CD8-positive, alpha-beta T cell (primary cell): ENCODE measurements at regions of chr6 and their contacts with region 1.

Region 1: DNA sequence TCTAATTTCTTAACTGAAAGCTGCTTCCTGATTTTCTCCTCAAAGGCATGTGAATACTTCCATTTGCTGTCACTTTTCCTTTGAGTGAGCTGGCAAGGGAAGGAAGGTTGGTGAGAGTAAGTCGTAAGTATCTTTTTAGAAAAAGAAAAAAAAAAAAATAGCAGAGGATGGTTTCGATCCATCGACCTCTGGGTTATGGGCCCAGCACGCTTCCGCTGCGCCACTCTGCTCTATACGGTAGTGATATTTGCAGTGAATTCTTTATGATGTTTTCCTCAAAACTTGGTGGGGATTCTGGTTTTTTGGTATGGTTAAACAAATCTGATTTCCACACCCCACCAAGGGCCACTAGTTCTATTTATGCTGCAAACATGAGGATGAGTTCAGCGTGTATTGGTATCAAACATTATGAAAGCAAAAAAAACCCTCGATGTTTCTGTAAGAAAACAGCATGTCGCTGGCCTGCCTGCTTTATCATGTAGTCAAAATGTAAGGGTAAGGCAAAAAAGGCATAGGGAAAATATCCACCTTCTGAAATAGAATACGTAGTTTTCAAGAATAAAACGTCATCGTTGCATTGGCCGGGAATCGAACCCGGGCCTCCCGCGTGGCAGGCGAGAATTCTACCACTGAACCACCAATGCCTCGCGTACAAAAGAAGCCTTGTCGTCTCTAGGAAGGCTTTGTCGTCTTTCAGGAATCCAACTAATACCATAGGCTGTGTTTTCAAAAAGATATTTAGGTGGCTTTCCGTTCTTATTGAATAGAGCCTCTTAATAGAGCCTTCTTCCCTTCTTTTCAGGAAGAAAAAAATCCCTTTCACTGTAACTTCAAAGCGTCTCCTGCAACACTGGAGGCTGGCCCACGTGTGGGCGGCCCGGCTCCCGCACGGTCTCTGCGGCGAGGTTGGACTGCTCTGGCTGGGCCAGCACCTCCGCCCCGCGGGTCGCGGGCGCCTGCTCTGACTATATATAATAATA is 9.6 kb downstream of the OR2B2 start:
- DNase-seq: peak; percentile 83 to 95 (median 91)
- ATAC-seq: peak; percentile 80
- H3K4me3 ChIP-seq: peak overlapping the region; percentile 61
- H3K4me3 Mint-ChIP-seq: peak overlapping the region; percentile 88
- H3K27ac ChIP-seq: peak overlapping the region; percentile 69 to 89
- H3K27ac Mint-ChIP-seq: peak overlapping the region; percentile 97
- H3K4me1 ChIP-seq: peaks cover 4% of the 10 kb centered on the region
- H3K4me1 Mint-ChIP-seq: peaks cover 5% of the 10 kb centered on the region
- H3K27me3 ChIP-seq: no peaks in the 10 kb centered on the region
- H3K27me3 Mint-ChIP-seq: peaks cover 8% of the 10 kb centered on the region
- CTCF ChIP-seq: no peak

Region 2: GRCh38 chr6:27479319-27480182 is 423.1 kb before region 1 on chr6:
- CTCF ChIA-PET with region 1: no interaction called
- POLR2A ChIA-PET with region 1: no interaction called
- intact Hi-C with region 1: loop called (anchors 2 kb)
- DNase-seq: peak; percentile 83 to 97 (median 87)
- ATAC-seq: peak; percentile 69
- H3K4me3 ChIP-seq: peak overlapping the region; percentile 79 to 96
- H3K4me3 Mint-ChIP-seq: no peak overlapping the region
- H3K27ac ChIP-seq: peak overlapping the region; percentile 96 to 99
- H3K27ac Mint-ChIP-seq: no peak overlapping the region
- H3K4me1 ChIP-seq: peaks cover 13% of the 10 kb centered on the region
- H3K4me1 Mint-ChIP-seq: peaks cover 9% of the 10 kb centered on the region
- H3K27me3 ChIP-seq: no peaks in the 10 kb centered on the region
- H3K27me3 Mint-ChIP-seq: no peaks in the 10 kb centered on the region
- CTCF ChIP-seq: no peak

Region 3: GRCh38 chr6:27687154-27688013 is 215.2 kb before region 1 on chr6:
- CTCF ChIA-PET with region 1: no interaction called
- POLR2A ChIA-PET with region 1: no interaction called
- intact Hi-C with region 1: loop called (anchors 2 to 5 kb)
- DNase-seq: peak; percentile 58 to 88 (median 74)
- ATAC-seq: peak; percentile 72
- H3K4me3 ChIP-seq: peak overlapping the region; percentile 60 to 74
- H3K4me3 Mint-ChIP-seq: peak overlapping the region; percentile 94
- H3K27ac ChIP-seq: peak overlapping the region; percentile 15 to 55
- H3K27ac Mint-ChIP-seq: peak overlapping the region; percentile 93
- H3K4me1 ChIP-seq: peaks cover 3% of the 10 kb centered on the region
- H3K4me1 Mint-ChIP-seq: peaks cover 18% of the 10 kb centered on the region
- H3K27me3 ChIP-seq: no peaks in the 10 kb centered on the region
- H3K27me3 Mint-ChIP-seq: peaks cover 6% of the 10 kb centered on the region
- CTCF ChIP-seq: peak; percentile 67

Region 4: DNA sequence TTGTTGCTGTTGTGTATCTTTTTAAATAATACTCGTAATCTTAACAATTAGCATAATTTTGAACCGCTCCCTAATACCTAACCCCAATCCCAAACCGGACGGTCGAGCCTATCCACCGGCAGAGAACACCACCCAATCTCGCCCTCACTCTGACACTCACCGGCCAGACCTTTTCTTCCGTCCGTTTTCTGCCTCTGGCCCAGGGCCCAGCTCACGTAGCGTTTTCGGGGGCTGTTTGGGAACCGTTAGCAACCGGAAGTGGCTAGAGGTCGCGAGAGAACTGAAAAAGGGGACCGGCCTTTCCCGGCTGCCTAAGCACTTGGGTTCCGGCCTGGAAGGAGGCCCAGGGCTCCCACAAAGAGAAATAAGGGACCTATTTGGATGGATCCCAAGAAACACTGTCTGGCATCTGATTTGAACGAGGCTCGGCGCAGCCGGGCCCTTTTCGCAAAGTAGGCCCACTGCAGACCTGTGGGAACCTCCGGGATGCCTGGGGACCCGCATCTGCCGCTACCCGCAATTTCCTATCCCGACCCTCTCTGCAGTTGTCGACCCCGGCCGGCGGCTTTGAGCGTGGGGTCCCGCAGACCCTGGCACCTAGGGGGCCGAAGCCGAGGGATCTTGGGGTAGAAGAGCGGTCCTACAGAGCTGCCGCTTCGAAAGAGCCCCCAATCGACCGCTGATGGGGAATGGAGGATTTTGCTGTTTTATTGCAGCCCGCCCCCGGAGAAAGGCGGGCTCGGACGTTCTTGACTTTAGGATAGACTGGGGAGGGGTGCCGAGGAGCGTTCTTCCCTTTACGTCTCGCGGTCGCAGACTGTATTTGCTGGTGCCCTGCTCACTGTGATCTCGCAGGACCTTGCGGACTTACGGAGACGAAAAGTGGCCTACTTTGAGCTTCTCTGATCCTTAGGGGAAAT is 234.2 kb after region 1 on chr6:
- CTCF ChIA-PET with region 1: no interaction called
- POLR2A ChIA-PET with region 1: no interaction called
- intact Hi-C with region 1: loop called (anchors 2 to 5 kb)
- DNase-seq: peak; percentile 52 to 91 (median 77)
- ATAC-seq: peak; percentile 35
- H3K4me3 ChIP-seq: peak overlapping the region; percentile 79 to 88
- H3K4me3 Mint-ChIP-seq: peak overlapping the region; percentile 94
- H3K27ac ChIP-seq: peak overlapping the region; percentile 87 to 92
- H3K27ac Mint-ChIP-seq: peak overlapping the region; percentile 99
- H3K4me1 ChIP-seq: peaks cover 28% of the 10 kb centered on the region
- H3K4me1 Mint-ChIP-seq: peaks cover 71% of the 10 kb centered on the region
- H3K27me3 ChIP-seq: no peaks in the 10 kb centered on the region
- H3K27me3 Mint-ChIP-seq: no peaks in the 10 kb centered on the region
- CTCF ChIP-seq: no peak

Region 5: GRCh38 chr6:28349892-28350737 is 447.5 kb after region 1 on chr6 and contains the start of gene ZKSCAN3:
- CTCF ChIA-PET with region 1: no interaction called
- POLR2A ChIA-PET with region 1: no interaction called
- intact Hi-C with region 1: loop called (anchors 2 to 5 kb)
- DNase-seq: peak; percentile 57 to 88 (median 82)
- ATAC-seq: peak; percentile 99
- H3K4me3 ChIP-seq: peak within 1 kb of the TSS; percentile 69 to 81
- H3K4me3 Mint-ChIP-seq: peak within 1 kb of the TSS; percentile 98
- H3K27ac ChIP-seq: peak within 1 kb of the TSS; percentile 54 to 55
- H3K27ac Mint-ChIP-seq: peak within 1 kb of the TSS; percentile 95
- H3K4me1 ChIP-seq: peaks cover 15% of the 10 kb centered on the region
- H3K4me1 Mint-ChIP-seq: peaks cover 36% of the 10 kb centered on the region
- H3K27me3 ChIP-seq: peaks cover 0 to 3% of the 10 kb centered on the region in 2 experiments
- H3K27me3 Mint-ChIP-seq: peaks cover 12% of the 10 kb centered on the region
- CTCF ChIP-seq: no peak
- total RNA-seq, gene ZKSCAN3: 0.61 to 0.68 TPM

Region 6: GRCh38 chr6:28981833-28982475 is 1079.3 kb after region 1 on chr6:
- CTCF ChIA-PET with region 1: no interaction called
- POLR2A ChIA-PET with region 1: no interaction called
- intact Hi-C with region 1: loop called (anchors 10 kb)
- DNase-seq: peak; percentile 43 to 89 (median 70)
- ATAC-seq: peak; percentile 69
- H3K4me3 ChIP-seq: peak overlapping the region; percentile 94 to 98
- H3K4me3 Mint-ChIP-seq: peak overlapping the region; percentile 89
- H3K27ac ChIP-seq: peak overlapping the region; percentile 14 to 59
- H3K27ac Mint-ChIP-seq: peak overlapping the region; percentile 91
- H3K4me1 ChIP-seq: peaks cover 17% of the 10 kb centered on the region
- H3K4me1 Mint-ChIP-seq: peaks cover 59% of the 10 kb centered on the region
- H3K27me3 ChIP-seq: peaks cover 0 to 6% of the 10 kb centered on the region in 2 experiments
- H3K27me3 Mint-ChIP-seq: peaks cover 34% of the 10 kb centered on the region
- CTCF ChIP-seq: no peak